Dorsolateral prefrontal cortex (tissue), 120 donors: ENCODE measurements at regions of chr1 and their contacts with region 1.

Region 1: DNA sequence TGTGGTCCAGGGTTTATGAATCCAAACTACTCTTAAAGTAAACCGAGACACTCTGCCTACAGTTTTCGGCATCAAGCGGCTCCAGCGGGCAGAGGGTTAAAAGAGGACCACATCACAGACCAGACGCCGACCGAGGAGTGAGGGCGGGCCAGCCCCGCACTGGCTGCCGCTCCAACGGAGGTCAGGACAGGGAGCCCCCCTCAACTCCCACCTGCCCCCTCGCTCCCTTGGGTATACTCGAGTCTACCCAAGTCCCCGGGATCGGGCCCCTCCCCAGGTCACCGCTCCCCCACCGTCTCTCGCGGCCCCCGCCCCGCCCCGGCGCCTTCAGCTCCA is 312 bp downstream of the ARNT start:
- DNase-seq: peak in 4 of 10 donors; percentile 49 to 67 (median 54)
- H3K4me3 ChIP-seq: peak overlapping the region; percentile 61 to 97 (median 87)
- H3K27ac ChIP-seq: peak overlapping the region; percentile 67 to 98 (median 95)
- H3K27me3 ChIP-seq: no peaks in the 10 kb centered on the region
- CTCF ChIP-seq: no peak

Region 2: GRCh38 chr1:150578965-150579798 is 296.9 kb before region 1 on chr1 and contains the start of gene MCL1:
- intact Hi-C with region 1: loop called in 1 of 2 experiments (anchors 5 kb)
- DNase-seq: peak; percentile 72 to 94 (median 92)
- H3K4me3 ChIP-seq: peak within 1 kb of the TSS; percentile 59 to 99 (median 94)
- H3K27ac ChIP-seq: peak within 1 kb of the TSS; percentile 89 to 100 (median 98)
- H3K27me3 ChIP-seq: no peaks in the 10 kb centered on the region
- CTCF ChIP-seq: peak in 38 of 56 donors; percentile 13 to 61 (median 38)
- total RNA-seq, gene MCL1: 43.4 to 130 (median 70.6) TPM

Region 3: DNA sequence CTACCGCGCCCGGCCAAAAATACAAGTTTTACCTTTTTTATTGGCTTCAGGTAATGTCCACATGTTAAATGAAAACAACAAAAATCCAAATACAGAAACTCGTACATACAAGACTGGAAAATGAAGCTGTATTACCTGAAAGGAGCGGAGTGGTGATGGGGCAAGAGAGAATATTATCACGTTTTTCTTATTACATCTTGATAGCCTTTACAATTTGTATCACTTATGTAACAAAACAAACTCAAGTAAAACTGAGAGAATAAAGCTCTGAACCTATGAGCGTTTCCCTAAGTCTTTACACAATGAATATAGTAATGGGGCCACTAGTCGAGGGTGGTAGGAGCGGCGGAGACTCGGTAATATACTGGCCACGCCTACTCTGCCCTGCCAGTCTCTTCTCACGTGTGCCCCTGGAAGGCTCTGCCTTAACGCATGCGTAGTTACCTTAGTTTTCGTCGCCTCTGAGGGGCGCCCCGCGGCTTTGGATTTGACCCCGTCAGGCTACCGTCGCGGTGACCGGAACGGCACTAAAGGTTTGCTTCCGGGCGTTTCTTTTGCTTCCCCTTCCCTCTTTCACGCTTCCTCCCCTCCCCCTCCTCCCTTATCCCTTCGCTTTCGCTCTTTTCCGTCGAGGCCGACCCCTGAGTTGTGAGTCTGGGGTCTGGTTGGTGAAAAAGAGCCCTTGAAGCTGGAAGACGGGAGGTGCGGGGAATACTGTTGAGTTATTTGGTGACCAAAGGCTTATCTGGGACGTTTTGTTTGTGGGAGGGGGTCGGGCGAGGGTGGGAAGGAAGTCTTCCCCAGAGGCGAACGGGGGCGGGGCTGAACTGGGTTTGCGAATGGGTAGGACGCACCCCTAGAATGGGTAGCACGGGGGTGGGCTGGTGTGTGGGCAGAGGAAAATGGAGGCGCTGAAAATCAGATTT is 50.0 kb after region 1 on chr1 and contains the start of gene SETDB1:
- intact Hi-C with region 1: loop called (anchors 5 kb)
- DNase-seq: peak; percentile 85 to 93 (median 90)
- H3K4me3 ChIP-seq: peak within 1 kb of the TSS; percentile 47 to 94 (median 75)
- H3K27ac ChIP-seq: peak within 1 kb of the TSS in 58 of 59 donors; percentile 3 to 92 (median 80)
- H3K27me3 ChIP-seq: no peaks in the 10 kb centered on the region
- CTCF ChIP-seq: peak in 52 of 56 donors; percentile 20 to 71 (median 47)
- total RNA-seq, gene SETDB1: 29.7 to 62.6 (median 42.4) TPM

Region 4: DNA sequence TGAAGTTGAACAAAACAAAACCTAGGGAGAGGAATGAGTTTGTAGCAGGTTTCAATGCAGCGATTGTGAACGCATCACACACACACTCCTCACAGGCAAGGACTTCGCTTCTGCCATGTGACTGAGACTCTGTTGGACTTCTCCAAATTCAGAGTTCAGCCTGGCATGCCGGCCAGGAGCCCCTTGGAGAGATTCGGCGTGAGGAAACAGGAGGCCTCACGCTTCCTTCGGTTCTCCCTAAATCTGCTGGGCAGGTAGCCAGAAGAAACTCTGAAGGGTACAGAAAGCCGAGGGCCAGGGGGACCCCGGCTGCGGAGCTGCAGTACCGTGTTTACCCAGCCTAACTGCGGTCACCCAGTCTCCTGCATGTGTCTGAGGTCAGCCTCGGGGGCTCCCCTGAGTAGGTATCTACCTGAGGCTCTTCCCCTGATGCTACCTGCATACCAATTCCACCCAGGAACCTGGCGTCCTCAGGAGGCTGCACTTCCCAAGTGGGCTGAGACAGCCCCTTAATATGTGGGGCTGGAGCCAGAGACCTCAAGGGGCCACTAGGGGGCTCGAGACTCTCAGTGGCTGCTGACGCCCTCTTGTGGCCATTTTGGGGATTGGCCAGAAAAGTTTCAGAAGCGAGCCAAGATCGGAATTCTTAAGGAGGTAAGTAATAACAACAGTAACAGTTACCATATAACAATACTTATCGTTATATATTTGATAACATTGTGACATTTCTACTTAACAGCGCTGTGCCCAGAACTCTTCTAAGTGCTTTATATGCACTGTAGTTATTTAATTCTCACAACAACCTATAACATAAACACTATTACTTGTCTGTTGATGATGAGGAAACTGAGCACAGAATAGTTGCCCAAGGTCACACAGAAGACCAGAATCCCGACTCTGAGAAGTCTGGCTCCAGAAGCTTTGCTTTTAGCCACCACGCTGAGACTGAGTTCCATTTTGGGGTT is 103.3 kb after region 1 on chr1:
- intact Hi-C with region 1: loop called (anchors 5 kb)
- DNase-seq: peak; percentile 68 to 93 (median 80)
- H3K4me3 ChIP-seq: peak overlapping the region in 56 of 59 donors; percentile 0 to 64 (median 42)
- H3K27ac ChIP-seq: peak overlapping the region in 58 of 59 donors; percentile 2 to 99 (median 76)
- H3K27me3 ChIP-seq: no peaks in the 10 kb centered on the region
- CTCF ChIP-seq: peak; percentile 94 to 100 (median 100)

Region 5: DNA sequence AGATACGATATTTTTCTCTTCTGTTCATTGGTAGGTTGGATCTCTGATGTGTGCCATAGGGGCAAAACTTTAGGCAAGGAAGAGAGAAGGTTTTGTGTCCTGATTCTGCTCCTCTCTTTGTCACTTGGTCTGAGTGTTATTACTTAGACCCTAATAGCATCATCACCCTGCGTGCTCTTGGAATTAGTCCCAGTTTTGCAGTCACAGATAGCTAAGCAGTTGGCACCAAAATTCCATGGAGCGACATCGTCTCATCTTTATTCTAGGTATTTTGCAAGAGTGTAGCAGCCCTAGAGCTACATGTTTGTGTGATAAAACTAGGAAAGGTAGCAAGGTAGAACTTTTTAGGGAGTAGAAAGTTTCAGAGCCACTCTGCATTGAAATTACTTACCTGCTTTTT is 346.0 kb after region 1 on chr1:
- intact Hi-C with region 1: no loop called
- DNase-seq: peak in 1 of 10 donors; percentile 27
- H3K4me3 ChIP-seq: no peak overlapping the region
- H3K27ac ChIP-seq: peak overlapping the region in 3 of 59 donors; percentile 16 to 37 (median 32)
- H3K27me3 ChIP-seq: no peaks in the 10 kb centered on the region
- CTCF ChIP-seq: no peak